Aorta (tissue), 5 donors: ENCODE measurements at regions of chr11 and their contacts with region 1.

Region 1: DNA sequence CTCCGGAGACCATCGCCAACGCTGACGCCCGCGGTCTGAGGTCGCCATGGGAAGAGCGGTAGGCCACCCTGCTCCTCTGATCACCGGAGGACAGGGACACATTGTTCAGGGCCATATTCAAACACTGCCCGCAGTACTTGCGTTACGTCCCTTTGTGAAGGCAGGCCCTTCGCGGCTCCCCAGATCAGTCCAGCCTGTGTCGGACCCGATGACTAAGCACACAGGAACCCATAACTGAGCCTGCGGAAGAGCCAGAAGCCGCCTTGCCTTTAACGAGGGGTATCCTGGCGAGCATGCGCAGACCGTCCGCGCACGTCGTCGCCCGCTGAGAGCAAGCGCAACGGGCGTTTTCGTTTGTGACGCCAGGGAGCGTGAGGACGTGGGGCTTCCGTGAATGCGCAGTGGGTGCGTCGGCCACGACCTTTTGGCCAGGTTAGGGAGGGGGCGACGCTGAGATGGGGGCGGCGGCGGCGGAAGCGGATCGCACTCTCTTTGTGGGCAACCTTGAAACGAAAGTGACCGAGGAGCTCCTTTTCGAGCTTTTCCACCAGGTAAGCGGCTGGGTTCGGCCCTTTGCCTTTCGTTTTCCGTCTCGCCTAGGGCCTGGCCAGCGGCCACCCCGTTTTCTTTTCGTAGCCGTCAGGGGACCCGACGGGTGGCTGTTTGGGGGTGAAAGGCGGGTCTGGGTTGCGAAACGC is at the starts of genes C11orf71 and RBM7:
- DNase-seq: peak; percentile 99 to 100
- ATAC-seq: peak; percentile 98
- H3K4me3 ChIP-seq: peak within 1 kb of the TSS; percentile 82 to 84
- H3K27ac ChIP-seq: peak within 1 kb of the TSS; percentile 79 to 94
- H3K4me1 ChIP-seq: peaks cover 1 to 4% of the 10 kb centered on the region in 2 donors
- H3K27me3 ChIP-seq: no peaks in the 10 kb centered on the region
- total RNA-seq, gene C11orf71: 4.4 to 4.9 TPM
- total RNA-seq, gene RBM7: 37.1 to 37.9 TPM

Region 2: GRCh38 chr11:114295676-114296604 is 104.4 kb before region 1 on chr11 and contains the start of gene NNMT:
- intact Hi-C with region 1: loop called in 1 of 2 experiments (anchors 10 kb)
- DNase-seq: peak; percentile 91
- ATAC-seq: peak; percentile 90
- H3K4me3 ChIP-seq: peak within 1 kb of the TSS; percentile 95 to 99
- H3K27ac ChIP-seq: peak within 1 kb of the TSS; percentile 90 to 100
- H3K4me1 ChIP-seq: no peaks in the 10 kb centered on the region
- H3K27me3 ChIP-seq: no peaks in the 10 kb centered on the region
- total RNA-seq, gene NNMT: 597 to 862 TPM

Region 3: GRCh38 chr11:114348200-114349191 is 51.9 kb before region 1 on chr11:
- intact Hi-C with region 1: loop called (anchors 2 to 5 kb)
- DNase-seq: no peak
- ATAC-seq: no peak
- H3K4me3 ChIP-seq: no peak overlapping the region
- H3K27ac ChIP-seq: no peak overlapping the region
- H3K4me1 ChIP-seq: no peaks in the 10 kb centered on the region
- H3K27me3 ChIP-seq: no peaks in the 10 kb centered on the region

Region 4: GRCh38 chr11:114366331-114367243 is 33.8 kb before region 1 on chr11:
- intact Hi-C with region 1: loop called in 1 of 2 experiments (anchors 5 kb)
- DNase-seq: peak in 1 of 2 donors; percentile 56
- ATAC-seq: no peak
- H3K4me3 ChIP-seq: no peak overlapping the region
- H3K27ac ChIP-seq: peak overlapping the region; percentile 28 to 74
- H3K4me1 ChIP-seq: peaks cover 0 to 6% of the 10 kb centered on the region in 2 donors
- H3K27me3 ChIP-seq: no peaks in the 10 kb centered on the region

Region 5: GRCh38 chr11:114416441-114416961 is 16.1 kb after region 1 on chr11:
- intact Hi-C with region 1: no loop called
- DNase-seq: no peak
- ATAC-seq: peak; percentile 26
- H3K4me3 ChIP-seq: no peak overlapping the region
- H3K27ac ChIP-seq: no peak overlapping the region
- H3K4me1 ChIP-seq: no peaks in the 10 kb centered on the region
- H3K27me3 ChIP-seq: no peaks in the 10 kb centered on the region

Region 6: GRCh38 chr11:114439229-114440120 is 39.1 kb after region 1 on chr11 and contains the start of gene REXO2:
- intact Hi-C with region 1: loop called (anchors 2 to 5 kb)
- DNase-seq: peak; percentile 97 to 99
- ATAC-seq: peak; percentile 98
- H3K4me3 ChIP-seq: peak within 1 kb of the TSS; percentile 36 to 79
- H3K27ac ChIP-seq: peak within 1 kb of the TSS in 1 of 2 donors; percentile 33
- H3K4me1 ChIP-seq: no peaks in the 10 kb centered on the region
- H3K27me3 ChIP-seq: no peaks in the 10 kb centered on the region
- total RNA-seq, gene REXO2: 103 to 109 TPM

Region 7: DNA sequence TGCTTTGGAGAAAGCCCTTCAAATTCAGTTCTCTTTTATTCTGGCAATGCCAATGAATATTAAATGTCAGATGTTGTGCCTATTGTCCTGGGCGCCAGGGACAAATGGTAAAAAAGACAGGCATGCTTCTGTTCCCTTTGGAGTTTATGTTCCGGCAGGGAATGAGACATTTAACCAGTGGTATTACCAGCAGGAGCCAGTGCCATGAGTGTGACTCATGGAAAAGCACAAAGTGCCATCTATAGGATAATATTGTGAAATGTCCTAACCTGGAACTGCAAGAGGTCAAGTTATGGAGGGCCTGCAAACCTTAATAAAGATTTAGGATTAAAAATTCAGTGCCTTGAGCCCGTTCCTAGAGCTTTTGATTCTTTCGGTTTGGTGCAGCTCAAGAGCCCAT is 78.4 kb after region 1 on chr11:
- intact Hi-C with region 1: no loop called
- DNase-seq: no peak
- ATAC-seq: no peak
- H3K4me3 ChIP-seq: no peak overlapping the region
- H3K27ac ChIP-seq: no peak overlapping the region
- H3K4me1 ChIP-seq: no peaks in the 10 kb centered on the region
- H3K27me3 ChIP-seq: no peaks in the 10 kb centered on the region